OCI-LY7 (cell line): ENCODE measurements at regions of chr4 and their contacts with region 1.

Region 1: DNA sequence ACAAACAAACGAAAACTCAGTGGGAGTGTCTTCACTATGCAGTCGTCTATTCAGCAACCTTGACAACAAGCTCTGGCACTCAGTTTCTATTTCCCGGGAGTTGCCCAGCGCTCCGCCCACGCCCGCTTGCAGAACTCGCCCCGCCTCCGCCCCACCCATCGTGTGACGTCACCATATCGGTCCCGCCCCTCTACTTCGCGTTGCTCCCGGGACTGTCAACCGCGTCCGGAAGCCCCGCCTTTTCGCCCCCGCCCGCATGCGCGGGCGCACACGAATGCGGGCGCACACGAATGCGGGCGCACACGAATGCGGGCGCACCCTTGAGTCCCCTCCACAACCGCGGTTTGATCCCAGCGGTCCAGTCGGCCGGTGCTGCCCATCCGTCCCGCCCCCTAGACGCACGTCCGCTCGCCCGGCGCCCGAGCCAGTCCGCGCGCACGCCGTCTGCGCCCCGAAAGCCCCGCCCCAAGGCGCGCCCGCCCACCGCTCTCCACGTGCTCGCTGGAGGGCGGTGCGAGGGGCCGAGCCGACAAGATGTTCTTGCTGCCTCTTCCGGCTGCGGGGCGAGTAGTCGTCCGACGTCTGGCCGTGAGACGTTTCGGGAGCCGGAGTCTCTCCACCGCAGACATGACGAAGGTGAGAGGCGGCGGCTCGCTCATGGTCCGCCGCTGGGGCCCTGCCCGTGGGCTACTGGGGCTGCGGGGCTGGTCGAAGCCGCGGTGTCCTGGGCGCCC is at the start of gene LAP3:
- DNase-seq: peak; percentile 97
- H3K4me3 ChIP-seq: peak within 1 kb of the TSS; percentile 79
- H3K27ac ChIP-seq: peak within 1 kb of the TSS; percentile 71
- H3K4me1 ChIP-seq: peaks cover 39% of the 10 kb centered on the region
- CTCF ChIP-seq: no peak
- total RNA-seq, gene LAP3: 111 and 115 TPM in 2 replicates

Region 2: GRCh38 chr4:17544205-17544604 is 32.9 kb before region 1 on chr4:
- CTCF ChIA-PET with region 1: no interaction called
- POLR2A ChIA-PET with region 1: interaction called, 5 read pairs
- intact Hi-C with region 1: loop called (anchors 2 kb)
- DNase-seq: no peak
- H3K4me3 ChIP-seq: no peak overlapping the region
- H3K27ac ChIP-seq: no peak overlapping the region
- H3K4me1 ChIP-seq: no peaks in the 10 kb centered on the region
- CTCF ChIP-seq: no peak

Region 3: GRCh38 chr4:17614416-17615299 is 37.6 kb after region 1 on chr4 and contains the start of gene MED28:
- CTCF ChIA-PET with region 1: no interaction called
- POLR2A ChIA-PET with region 1: interaction called, 10 read pairs
- intact Hi-C with region 1: loop called (anchors 1 kb)
- DNase-seq: peak; percentile 98
- H3K4me3 ChIP-seq: peak within 1 kb of the TSS; percentile 88
- H3K27ac ChIP-seq: peak within 1 kb of the TSS; percentile 52
- H3K4me1 ChIP-seq: peaks cover 32% of the 10 kb centered on the region
- CTCF ChIP-seq: no peak
- total RNA-seq, gene MED28: 20.7 and 27.0 TPM in 2 replicates

Region 4: DNA sequence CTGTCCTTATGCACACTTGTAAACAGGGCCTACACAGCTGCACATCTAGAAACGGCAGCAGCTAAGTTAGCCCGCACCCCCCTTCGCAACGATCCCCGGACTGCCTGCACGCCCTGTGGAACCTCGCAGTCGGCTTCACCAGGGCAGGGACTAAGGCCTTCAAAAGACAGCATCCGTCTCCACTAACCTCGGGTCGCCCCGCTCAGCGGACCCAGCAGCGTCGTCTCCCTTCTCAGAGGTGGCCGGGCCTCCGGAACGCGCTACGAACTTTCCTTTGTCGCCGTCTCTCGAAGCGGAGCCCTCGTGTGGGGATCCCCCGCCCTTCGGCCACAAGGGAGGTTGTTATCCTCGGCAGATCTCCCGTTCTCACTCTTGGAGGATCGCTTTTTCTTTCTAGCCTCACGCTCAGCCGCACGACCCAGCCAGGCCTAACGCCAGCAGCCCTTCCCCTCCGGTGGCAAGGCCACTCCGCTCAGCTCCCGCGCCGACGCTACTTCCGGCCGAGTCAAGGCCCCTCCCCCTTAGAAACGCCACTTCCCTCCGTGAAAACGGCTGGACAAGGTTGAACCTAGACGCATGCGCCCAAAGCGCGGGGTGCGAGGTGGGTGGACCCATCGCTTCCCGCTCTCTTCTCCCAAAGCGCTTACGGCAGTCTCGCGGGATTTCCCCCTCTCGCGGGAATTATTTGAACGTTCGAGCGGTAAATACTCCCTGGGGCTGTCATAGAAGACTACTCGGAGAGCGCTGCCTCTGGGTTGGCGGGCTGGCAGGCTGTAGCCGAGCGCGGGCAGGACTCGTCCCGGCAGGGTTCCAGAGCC is 233.4 kb after region 1 on chr4 and contains the starts of genes DCAF16 and NCAPG:
- CTCF ChIA-PET with region 1: no interaction called
- POLR2A ChIA-PET with region 1: interaction called, 4 read pairs
- intact Hi-C with region 1: loop called (anchors 1 kb)
- DNase-seq: peak; percentile 100
- H3K4me3 ChIP-seq: peak within 1 kb of the TSS; percentile 85
- H3K27ac ChIP-seq: peak within 1 kb of the TSS; percentile 91
- H3K4me1 ChIP-seq: peaks cover 52% of the 10 kb centered on the region
- CTCF ChIP-seq: no peak
- total RNA-seq, gene DCAF16: 88.7 and 88.8 TPM in 2 replicates
- total RNA-seq, gene NCAPG: 57.5 and 68.6 TPM in 2 replicates